GM12878 (cell line): ENCODE measurements at regions of chr12 and their contacts with region 1.

Region 1: GRCh38 chr12:130818635-130819576 is 20.1 kb downstream of the STX2 start:
- DNase-seq: peak; percentile 28
- ATAC-seq: peak; percentile 99
- H3K4me3 ChIP-seq: peak overlapping the region; percentile 59; the same call in 1 of the 2 replicates
- H3K27ac ChIP-seq: peak overlapping the region; percentile 37; the same call in 1 of the 2 replicates
- H3K4me1 ChIP-seq: peaks cover 17% of the 10 kb centered on the region
- H3K27me3 ChIP-seq: no peaks in the 10 kb centered on the region
- CTCF ChIP-seq: peak; percentile 83 to 91 (median 89)
- EP300 ChIP-seq: no peak
- POLR2A ChIP-seq: peak; percentile 41; the same call in 1 of the 2 replicates
- RAD21 ChIP-seq: peak; percentile 60

Region 2: GRCh38 chr12:130761537-130762318 is 57.2 kb before region 1 on chr12:
- CTCF ChIA-PET with region 1: interaction called, 16 read pairs
- POLR2A ChIA-PET with region 1: no interaction called
- RAD21 ChIA-PET with region 1: no interaction called
- SMC1A ChIA-PET with region 1: interaction called, 6 read pairs
- in situ Hi-C with region 1: loop called (anchors 5 kb)
- intact Hi-C with region 1: loop called (anchors 1 kb)
- DNase-seq: no peak
- ATAC-seq: peak; percentile 90
- H3K4me3 ChIP-seq: 0 out of 2 replicates have a peak overlapping the region, but pooled peaks have one; percentile 9
- H3K27ac ChIP-seq: no peak overlapping the region
- H3K4me1 ChIP-seq: no peaks in the 10 kb centered on the region; the same call in 1 of the 2 replicates
- H3K27me3 ChIP-seq: no peaks in the 10 kb centered on the region; a peak in 1 of 4 replicates
- CTCF ChIP-seq: peak; percentile 51 to 77 (median 61); a peak in 5 of 6 replicates
- EP300 ChIP-seq: no peak
- POLR2A ChIP-seq: no peak
- RAD21 ChIP-seq: peak; percentile 88

Region 3: GRCh38 chr12:130799051-130799450 is 19.9 kb before region 1 on chr12:
- CTCF ChIA-PET with region 1: interaction called, 16 read pairs
- POLR2A ChIA-PET with region 1: interaction called, 24 read pairs
- RAD21 ChIA-PET with region 1: interaction called, 10 read pairs
- SMC1A ChIA-PET with region 1: interaction called, 7 read pairs
- in situ Hi-C with region 1: no loop called
- intact Hi-C with region 1: no loop called
- DNase-seq: no peak
- ATAC-seq: no peak
- H3K4me3 ChIP-seq: no peak overlapping the region
- H3K27ac ChIP-seq: no peak overlapping the region
- H3K4me1 ChIP-seq: peaks cover 13% of the 10 kb centered on the region
- H3K27me3 ChIP-seq: no peaks in the 10 kb centered on the region
- CTCF ChIP-seq: no peak
- EP300 ChIP-seq: no peak
- POLR2A ChIP-seq: no peak
- RAD21 ChIP-seq: no peak

Region 4: DNA sequence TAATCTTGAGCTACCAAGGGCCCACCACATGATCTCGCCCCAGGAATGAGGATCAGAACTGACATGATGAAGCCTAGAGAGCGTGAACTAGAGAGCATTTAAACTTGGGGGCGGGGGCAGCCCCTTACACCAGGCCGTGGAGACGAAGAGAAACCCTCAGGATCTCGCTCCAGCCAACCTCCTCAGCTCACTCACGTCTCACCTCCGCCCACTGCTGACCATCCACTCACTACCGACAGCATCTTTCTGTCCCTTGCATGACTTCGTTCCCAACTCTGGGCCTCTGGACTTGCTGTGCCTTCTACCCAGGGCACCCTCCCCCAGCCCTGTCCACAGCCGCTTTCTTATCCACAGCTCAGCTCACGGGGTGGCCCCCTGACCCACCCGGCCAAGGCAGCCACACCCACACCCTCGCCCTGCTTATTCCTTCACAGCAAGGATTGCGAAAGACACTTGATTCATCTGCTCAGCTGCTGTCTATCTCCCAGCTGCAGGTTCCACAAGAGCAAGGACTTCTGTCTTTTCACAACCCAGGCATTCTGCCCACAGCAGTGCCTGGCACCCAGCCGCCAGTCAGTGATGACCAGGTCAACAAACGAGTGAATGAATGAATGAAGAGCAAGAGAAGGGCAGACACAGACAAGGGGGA is 13.8 kb after region 1 on chr12:
- CTCF ChIA-PET with region 1: interaction called, 18 read pairs
- POLR2A ChIA-PET with region 1: interaction called, 7 read pairs
- RAD21 ChIA-PET with region 1: interaction called, 5 read pairs
- SMC1A ChIA-PET with region 1: interaction called, 11 read pairs
- in situ Hi-C with region 1: no loop called
- intact Hi-C with region 1: no loop called
- DNase-seq: no peak
- ATAC-seq: no peak
- H3K4me3 ChIP-seq: no peak overlapping the region
- H3K27ac ChIP-seq: no peak overlapping the region
- H3K4me1 ChIP-seq: no peaks in the 10 kb centered on the region
- H3K27me3 ChIP-seq: no peaks in the 10 kb centered on the region
- CTCF ChIP-seq: no peak
- EP300 ChIP-seq: no peak
- POLR2A ChIP-seq: no peak
- RAD21 ChIP-seq: no peak

Region 5: GRCh38 chr12:131204416-131205274 is 385.7 kb after region 1 on chr12:
- CTCF ChIA-PET with region 1: no interaction called
- POLR2A ChIA-PET with region 1: no interaction called
- RAD21 ChIA-PET with region 1: no interaction called
- SMC1A ChIA-PET with region 1: no interaction called
- in situ Hi-C with region 1: no loop called
- intact Hi-C with region 1: no loop called
- DNase-seq: no peak
- ATAC-seq: no peak
- H3K4me3 ChIP-seq: no peak overlapping the region
- H3K27ac ChIP-seq: no peak overlapping the region
- H3K4me1 ChIP-seq: no peaks in the 10 kb centered on the region
- H3K27me3 ChIP-seq: no peaks in the 10 kb centered on the region
- CTCF ChIP-seq: no peak
- EP300 ChIP-seq: no peak
- POLR2A ChIP-seq: no peak
- RAD21 ChIP-seq: no peak